Dorsolateral prefrontal cortex (tissue), 120 donors: ENCODE measurements at regions of chr12 and their contacts with region 1.

Region 1: DNA sequence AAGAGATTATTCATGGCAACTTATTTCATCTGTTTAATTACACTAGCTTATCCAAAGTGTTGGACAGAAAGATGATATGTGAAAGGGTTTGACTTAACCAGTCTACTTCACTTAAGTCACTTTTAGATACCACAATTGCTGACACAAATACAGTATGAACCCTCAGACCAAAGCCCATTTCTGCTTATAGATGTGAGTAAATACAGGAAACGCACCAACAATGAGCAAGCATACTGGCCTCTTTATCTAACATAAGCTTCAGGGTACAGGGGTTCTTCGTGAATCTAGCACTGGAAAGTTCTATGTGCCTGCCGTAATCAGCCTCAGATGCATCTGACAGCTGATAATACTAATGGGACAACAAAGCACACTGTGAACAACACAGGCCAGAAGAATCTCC is 209.6 kb downstream of the MED13L start:
- DNase-seq: no peak
- H3K4me3 ChIP-seq: no peak overlapping the region
- H3K27ac ChIP-seq: peak overlapping the region in 21 of 59 donors; percentile 7 to 64 (median 35)
- H3K27me3 ChIP-seq: no peaks in the 10 kb centered on the region
- CTCF ChIP-seq: no peak

Region 2: DNA sequence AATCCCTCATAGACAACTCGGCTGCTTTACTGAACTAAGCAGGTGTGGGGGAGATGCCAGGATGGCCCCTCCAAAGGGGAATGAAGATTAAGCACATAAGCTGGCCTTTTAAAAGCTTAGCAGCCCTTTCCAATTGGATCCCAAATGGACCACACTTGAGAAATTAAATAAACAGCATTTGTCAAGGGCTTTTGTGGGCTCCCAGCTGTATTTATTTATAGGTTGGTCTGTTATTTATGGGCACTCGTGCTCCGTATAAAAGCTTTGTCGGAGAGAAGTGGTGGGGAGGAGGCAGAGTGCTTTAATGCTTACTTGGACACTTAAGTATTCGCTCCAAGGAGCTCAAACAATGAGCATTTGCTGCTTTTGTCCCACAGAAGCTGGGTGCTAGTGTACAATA is 370.6 kb before region 1 on chr12:
- intact Hi-C with region 1: no loop called
- DNase-seq: no peak
- H3K4me3 ChIP-seq: no peak overlapping the region
- H3K27ac ChIP-seq: no peak overlapping the region
- H3K27me3 ChIP-seq: peaks cover 0 to 24% (median 0%) of the 10 kb centered on the region in 45 donors
- CTCF ChIP-seq: no peak

Region 3: DNA sequence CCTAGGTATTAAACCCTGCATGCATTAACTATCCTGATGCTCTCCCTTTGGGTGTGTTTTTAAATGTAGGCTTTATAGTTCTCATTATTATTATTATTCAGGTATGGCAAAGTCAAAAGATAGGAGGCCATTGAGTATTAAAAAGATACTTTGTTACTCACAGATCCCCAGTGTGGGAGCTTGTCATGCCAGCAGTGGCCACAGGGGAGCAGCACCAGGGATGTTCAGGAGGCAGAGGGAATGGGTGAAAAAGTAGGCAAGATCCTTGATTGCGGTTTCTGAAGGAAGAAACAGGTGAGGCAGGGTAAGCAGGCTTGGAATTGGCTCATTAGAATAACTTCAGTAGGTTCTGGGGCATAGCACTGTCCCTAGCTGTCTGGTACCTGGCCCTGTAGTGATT is 172.6 kb before region 1 on chr12:
- intact Hi-C with region 1: no loop called
- DNase-seq: no peak
- H3K4me3 ChIP-seq: no peak overlapping the region
- H3K27ac ChIP-seq: no peak overlapping the region
- H3K27me3 ChIP-seq: peaks cover 0 to 30% (median 0%) of the 10 kb centered on the region in 45 donors
- CTCF ChIP-seq: peak in 5 of 56 donors; percentile 10 to 26 (median 16)

Region 4: GRCh38 chr12:116116650-116117424 is 48.9 kb after region 1 on chr12:
- intact Hi-C with region 1: loop called in 1 of 2 experiments (anchors 2 kb)
- DNase-seq: no peak
- H3K4me3 ChIP-seq: no peak overlapping the region
- H3K27ac ChIP-seq: no peak overlapping the region
- H3K27me3 ChIP-seq: no peaks in the 10 kb centered on the region
- CTCF ChIP-seq: no peak